Heart left ventricle (tissue), 16 donors: ENCODE measurements at regions of chr15 and their contacts with region 1.

Region 1: GRCh38 chr15:65384895-65385858 is 7.4 kb upstream of the IGDCC3 start:
- DNase-seq: peak; percentile 82 to 89 (median 85)
- ATAC-seq: peak; percentile 90 to 96 (median 94)
- H3K4me3 ChIP-seq: peak overlapping the region in 11 of 12 donors; percentile 7 to 58 (median 39)
- H3K27ac ChIP-seq: peak overlapping the region in 7 of 12 donors; percentile 9 to 65 (median 39)
- H3K4me1 ChIP-seq: peaks cover 0 to 25% (median 16%) of the 10 kb centered on the region in 12 donors
- H3K27me3 ChIP-seq: peaks cover 0 to 5% (median 0%) of the 10 kb centered on the region in 9 donors
- CTCF ChIP-seq: peak; percentile 76 to 92 (median 86)
- POLR2A ChIP-seq: no peak

Region 2: DNA sequence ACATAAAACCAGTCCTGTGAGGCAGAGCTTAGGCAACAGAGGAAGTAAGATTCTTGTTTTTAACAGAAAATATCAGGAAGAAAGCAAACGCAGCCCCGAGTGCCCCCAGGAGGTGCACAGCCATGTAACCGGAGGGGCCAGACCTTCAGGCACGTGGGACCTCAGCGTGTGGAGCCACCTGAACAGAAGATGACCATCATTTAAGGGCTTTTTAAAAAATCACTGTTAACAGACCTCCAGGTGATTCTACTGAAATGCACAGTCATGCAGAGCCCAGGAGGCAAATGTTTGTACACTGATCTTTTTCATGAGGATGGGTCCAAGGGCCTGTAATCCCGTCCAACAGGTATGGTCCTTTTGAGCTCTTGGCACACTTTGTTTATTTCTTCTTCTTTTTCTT is 434.3 kb before region 1 on chr15:
- intact Hi-C with region 1: no loop called
- DNase-seq: no peak
- ATAC-seq: no peak
- H3K4me3 ChIP-seq: no peak overlapping the region
- H3K27ac ChIP-seq: no peak overlapping the region
- H3K4me1 ChIP-seq: no peaks in the 10 kb centered on the region
- H3K27me3 ChIP-seq: no peaks in the 10 kb centered on the region
- CTCF ChIP-seq: no peak
- POLR2A ChIP-seq: no peak

Region 3: GRCh38 chr15:65177901-65178300 is 207.3 kb before region 1 on chr15:
- intact Hi-C with region 1: no loop called
- DNase-seq: no peak
- ATAC-seq: no peak
- H3K4me3 ChIP-seq: no peak overlapping the region
- H3K27ac ChIP-seq: no peak overlapping the region
- H3K4me1 ChIP-seq: peaks cover 0 to 21% (median 8%) of the 10 kb centered on the region in 12 donors
- H3K27me3 ChIP-seq: no peaks in the 10 kb centered on the region
- CTCF ChIP-seq: no peak
- POLR2A ChIP-seq: no peak

Region 4: GRCh38 chr15:65192016-65192415 is 193.2 kb before region 1 on chr15:
- intact Hi-C with region 1: loop called in 2 of 10 experiments (anchors 10 kb)
- DNase-seq: no peak
- ATAC-seq: no peak
- H3K4me3 ChIP-seq: no peak overlapping the region
- H3K27ac ChIP-seq: no peak overlapping the region
- H3K4me1 ChIP-seq: peaks cover 0 to 12% (median 0%) of the 10 kb centered on the region in 12 donors
- H3K27me3 ChIP-seq: no peaks in the 10 kb centered on the region
- CTCF ChIP-seq: no peak
- POLR2A ChIP-seq: no peak

Region 5: DNA sequence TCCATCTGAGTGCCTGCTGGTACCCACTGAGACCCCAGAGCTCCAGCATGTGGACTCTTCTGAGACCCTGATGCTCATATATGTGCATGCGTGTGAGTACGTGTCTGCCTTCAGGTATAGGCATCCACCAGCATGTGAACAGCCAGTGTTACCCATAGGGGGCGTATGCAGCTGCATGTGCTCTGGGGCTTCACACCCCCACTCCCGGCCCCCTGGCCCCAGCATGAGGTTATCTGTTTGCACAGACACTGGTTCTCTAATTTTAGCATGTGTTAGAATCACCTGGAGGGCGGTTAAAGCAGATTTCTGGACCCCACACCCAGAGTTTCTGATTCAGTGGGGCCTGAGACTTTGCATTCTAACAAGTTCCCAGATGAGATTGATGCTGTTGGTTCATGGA is 173.1 kb before region 1 on chr15:
- intact Hi-C with region 1: loop called in 2 of 10 experiments (anchors 10 kb)
- DNase-seq: no peak
- ATAC-seq: no peak
- H3K4me3 ChIP-seq: no peak overlapping the region
- H3K27ac ChIP-seq: peak overlapping the region in 6 of 12 donors; percentile 4 to 62 (median 48)
- H3K4me1 ChIP-seq: peaks cover 0 to 48% (median 6%) of the 10 kb centered on the region in 12 donors
- H3K27me3 ChIP-seq: no peaks in the 10 kb centered on the region
- CTCF ChIP-seq: peak in 7 of 12 donors; percentile 12 to 38 (median 21)
- POLR2A ChIP-seq: no peak

Region 6: DNA sequence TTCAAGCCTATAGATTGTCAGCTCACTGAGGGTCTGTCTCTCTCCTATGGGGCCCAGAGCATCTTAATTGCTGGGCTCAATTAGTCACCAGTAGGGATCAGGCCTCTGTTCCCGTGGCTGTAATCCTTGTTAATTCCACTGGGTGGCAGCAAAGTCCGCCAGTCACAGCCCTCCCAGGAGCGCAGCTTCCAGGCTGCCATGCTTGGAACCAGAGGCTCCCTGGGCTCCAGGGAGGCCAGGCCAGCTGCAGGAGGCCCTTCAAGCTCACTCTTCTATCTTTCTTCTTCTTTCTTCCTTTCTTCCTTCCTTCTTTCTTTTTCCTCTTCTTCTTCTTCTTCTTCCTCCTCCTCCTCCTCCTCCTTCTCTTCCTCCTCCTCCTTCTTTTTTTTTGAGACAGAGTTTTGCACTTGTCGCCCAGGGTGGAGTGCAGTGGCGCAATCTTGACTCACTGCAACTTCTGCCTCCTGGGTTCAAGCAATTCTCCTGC is 66.3 kb before region 1 on chr15:
- intact Hi-C with region 1: loop called (anchors 1 to 2 kb)
- DNase-seq: peak; percentile 74 to 83 (median 77)
- ATAC-seq: peak; percentile 79 to 91 (median 90)
- H3K4me3 ChIP-seq: no peak overlapping the region
- H3K27ac ChIP-seq: no peak overlapping the region
- H3K4me1 ChIP-seq: peaks cover 0 to 8% (median 0%) of the 10 kb centered on the region in 12 donors
- H3K27me3 ChIP-seq: no peaks in the 10 kb centered on the region
- CTCF ChIP-seq: peak; percentile 89 to 96 (median 92)
- POLR2A ChIP-seq: no peak

Region 7: GRCh38 chr15:65414841-65415621 is 29.9 kb after region 1 on chr15:
- intact Hi-C with region 1: no loop called
- DNase-seq: peak in 1 of 5 donors; percentile 64
- ATAC-seq: peak; percentile 50 to 68 (median 61)
- H3K4me3 ChIP-seq: no peak overlapping the region
- H3K27ac ChIP-seq: peak overlapping the region in 6 of 12 donors; percentile 7 to 30 (median 18)
- H3K4me1 ChIP-seq: peaks cover 0 to 22% (median 5%) of the 10 kb centered on the region in 12 donors
- H3K27me3 ChIP-seq: peaks cover 0 to 56% (median under 1%) of the 10 kb centered on the region in 9 donors
- CTCF ChIP-seq: no peak
- POLR2A ChIP-seq: no peak

Region 8: DNA sequence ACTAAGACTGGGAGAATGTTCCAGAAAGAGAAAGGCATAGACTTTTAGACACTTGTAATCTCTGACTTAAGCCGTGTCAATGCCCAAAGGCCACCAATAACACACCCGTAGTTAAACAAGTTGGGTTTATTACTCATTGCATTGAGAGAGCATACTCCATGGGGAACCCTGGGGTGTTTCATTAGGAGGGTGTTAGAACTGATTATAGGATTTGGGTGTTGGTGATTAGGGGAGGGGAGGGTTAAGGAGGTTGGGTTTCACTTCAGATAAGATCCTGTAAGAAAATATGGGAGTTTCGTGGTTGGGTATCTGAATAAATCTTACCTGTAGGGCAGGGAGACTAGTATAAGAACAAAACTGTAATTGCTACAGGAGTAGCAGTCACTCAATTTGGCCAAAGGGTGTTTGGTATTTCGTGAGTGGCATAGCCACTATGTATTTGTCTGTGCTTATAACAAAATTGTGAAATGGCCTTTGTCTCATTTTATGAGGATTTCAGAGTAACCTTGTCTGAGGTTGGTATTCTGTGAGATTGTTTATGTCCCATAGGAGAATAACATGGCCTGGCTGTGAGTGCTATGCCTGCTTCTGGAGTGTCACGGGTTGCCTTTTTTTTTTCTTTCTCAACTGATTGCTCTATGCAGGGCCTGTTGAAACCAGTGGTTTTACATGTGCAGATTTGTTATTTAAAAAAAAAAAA is 148.0 kb after region 1 on chr15:
- intact Hi-C with region 1: no loop called
- DNase-seq: no peak
- ATAC-seq: no peak
- H3K4me3 ChIP-seq: no peak overlapping the region
- H3K27ac ChIP-seq: no peak overlapping the region
- H3K4me1 ChIP-seq: peaks cover 0 to 31% (median 14%) of the 10 kb centered on the region in 12 donors
- H3K27me3 ChIP-seq: no peaks in the 10 kb centered on the region
- CTCF ChIP-seq: no peak
- POLR2A ChIP-seq: no peak